Activated B cell treated with CpG ODN at 0.5 μM for 24 hours (primary cell): ENCODE measurements at regions of chr20 and their contacts with region 1.

Region 1: DNA sequence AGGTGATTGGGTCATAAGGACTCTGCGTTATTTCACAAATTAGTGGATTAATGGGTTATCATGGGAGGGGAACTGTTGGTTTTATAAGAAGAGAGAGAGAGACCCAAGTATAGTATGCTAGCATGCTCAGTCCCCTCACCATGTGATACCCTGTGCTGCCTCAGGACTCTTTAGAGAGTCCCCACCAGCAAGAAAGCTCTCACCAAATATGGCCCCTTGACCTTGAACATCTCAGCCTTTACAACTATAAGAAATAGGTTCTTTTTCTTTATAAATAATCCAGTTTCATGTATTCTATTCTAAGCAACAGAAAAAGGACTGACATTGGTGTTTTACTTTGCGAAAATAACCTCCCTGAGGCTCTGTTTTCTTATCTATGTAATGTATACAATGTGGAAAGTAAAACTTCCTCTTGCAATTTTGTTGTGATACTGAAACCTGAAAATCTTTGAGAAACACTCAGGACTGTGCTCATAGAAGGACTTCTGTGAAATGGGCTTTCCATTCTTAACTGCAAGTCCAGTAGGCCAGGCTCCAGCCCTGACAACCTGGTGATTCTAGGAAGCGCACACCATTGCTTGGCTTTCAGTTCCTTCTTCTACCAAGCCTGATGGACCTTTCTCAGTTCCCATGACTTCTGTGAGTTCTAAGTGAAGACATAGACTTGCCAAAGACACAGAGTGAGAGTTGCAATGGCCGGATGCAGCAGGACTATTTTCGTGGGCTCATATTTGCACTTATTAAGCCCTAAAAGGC is 21.9 kb downstream of the SIRPD start:
- DNase-seq: no peak
- ATAC-seq: peak; percentile 68
- H3K4me3 Mint-ChIP-seq: no peak overlapping the region
- H3K27ac Mint-ChIP-seq: peak overlapping the region; percentile 60
- H3K4me1 Mint-ChIP-seq: peaks cover 40% of the 10 kb centered on the region
- H3K27me3 Mint-ChIP-seq: no peaks in the 10 kb centered on the region
- CTCF ChIP-seq: no peak

Region 2: GRCh38 chr20:1513801-1514200 is 21.8 kb before region 1 on chr20:
- CTCF ChIA-PET with region 1: no interaction called
- POLR2A ChIA-PET with region 1: no interaction called
- intact Hi-C with region 1: no loop called
- DNase-seq: no peak
- ATAC-seq: no peak
- H3K4me3 Mint-ChIP-seq: no peak overlapping the region
- H3K27ac Mint-ChIP-seq: no peak overlapping the region
- H3K4me1 Mint-ChIP-seq: no peaks in the 10 kb centered on the region
- H3K27me3 Mint-ChIP-seq: peaks cover 28% of the 10 kb centered on the region
- CTCF ChIP-seq: no peak

Region 3: DNA sequence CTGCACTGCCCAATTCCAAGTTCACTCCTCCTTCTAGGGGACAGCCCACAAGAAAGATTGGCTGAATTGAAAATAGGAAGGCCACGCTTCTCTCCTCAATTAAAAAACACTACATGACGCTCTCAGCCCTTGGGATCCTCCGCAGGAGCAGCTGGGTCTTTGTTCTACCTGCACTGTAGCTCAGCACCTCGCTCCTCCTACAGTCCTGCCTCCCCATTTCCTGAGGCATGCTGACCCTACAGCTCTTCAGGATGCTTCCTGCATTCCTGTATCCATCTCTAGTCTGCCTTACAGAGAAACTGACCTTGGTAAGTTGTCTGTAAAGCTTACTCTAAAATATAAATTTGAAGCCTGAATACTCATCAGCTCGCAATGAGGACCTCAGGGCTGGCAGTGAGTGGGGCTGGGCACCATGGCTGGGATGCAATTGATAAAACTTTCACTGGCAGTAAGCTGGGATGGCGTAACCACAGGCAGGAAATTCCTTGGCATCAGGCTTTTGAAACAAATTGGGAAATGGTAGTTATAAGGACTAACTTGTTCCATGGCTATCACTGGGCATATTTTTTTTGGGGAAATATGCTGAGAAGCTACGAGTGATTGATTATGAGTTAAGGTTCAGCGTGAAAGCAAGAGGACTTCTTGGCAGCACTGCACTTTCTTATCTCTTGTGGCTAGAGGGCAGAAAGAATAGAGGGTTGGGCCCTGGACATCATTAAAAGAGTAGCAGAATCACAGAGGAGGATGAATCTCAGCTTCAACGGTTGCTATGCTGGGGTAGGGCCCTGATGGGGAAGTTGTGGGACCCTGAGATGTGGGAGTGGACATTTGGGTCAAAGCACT is 95.9 kb after region 1 on chr20:
- CTCF ChIA-PET with region 1: no interaction called
- POLR2A ChIA-PET with region 1: no interaction called
- intact Hi-C with region 1: loop called (anchors 10 kb)
- DNase-seq: no peak
- ATAC-seq: no peak
- H3K4me3 Mint-ChIP-seq: no peak overlapping the region
- H3K27ac Mint-ChIP-seq: peak overlapping the region; percentile 68
- H3K4me1 Mint-ChIP-seq: no peaks in the 10 kb centered on the region
- H3K27me3 Mint-ChIP-seq: no peaks in the 10 kb centered on the region
- CTCF ChIP-seq: no peak

Region 4: GRCh38 chr20:1721687-1722512 is 186.3 kb after region 1 on chr20:
- CTCF ChIA-PET with region 1: no interaction called
- POLR2A ChIA-PET with region 1: no interaction called
- intact Hi-C with region 1: loop called (anchors 10 kb)
- DNase-seq: no peak
- ATAC-seq: no peak
- H3K4me3 Mint-ChIP-seq: no peak overlapping the region
- H3K27ac Mint-ChIP-seq: no peak overlapping the region
- H3K4me1 Mint-ChIP-seq: peaks cover 15% of the 10 kb centered on the region
- H3K27me3 Mint-ChIP-seq: peaks cover 2% of the 10 kb centered on the region
- CTCF ChIP-seq: no peak